HCT116 (cell line): ENCODE measurements at regions of chr5 and their contacts with region 1.

Region 1: DNA sequence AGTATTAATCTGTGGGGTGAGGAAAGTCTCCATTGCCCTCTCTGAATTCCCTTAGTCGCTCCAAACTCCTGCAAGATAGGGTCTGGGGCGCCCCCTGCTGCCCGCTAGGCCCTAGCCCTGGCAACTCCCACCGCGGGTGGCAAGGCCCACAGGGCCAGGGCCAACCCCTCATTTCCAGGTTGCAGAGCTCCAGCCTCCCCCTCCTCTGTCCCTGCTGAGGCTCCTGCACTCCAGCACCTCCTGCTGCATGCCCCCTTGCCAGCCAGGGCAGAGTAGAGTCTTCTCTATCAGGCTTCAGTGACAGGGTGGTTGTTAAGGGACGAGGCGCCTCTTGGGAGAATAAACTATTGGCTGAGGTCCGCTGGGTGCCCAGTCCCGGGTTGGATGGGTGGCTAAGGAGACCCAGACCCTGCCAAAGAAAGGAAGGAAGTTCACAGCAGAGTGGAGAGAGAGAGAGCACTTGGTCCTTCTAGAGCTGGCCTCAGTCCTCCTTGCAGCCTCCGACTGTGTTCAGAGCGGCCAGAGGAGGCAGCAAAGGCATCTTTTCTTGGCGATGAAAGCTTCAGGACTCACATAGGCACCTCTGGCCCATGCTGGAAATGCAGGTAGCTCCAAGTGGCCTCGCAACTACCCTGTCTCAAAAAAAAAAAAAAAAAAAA is 45.6 kb downstream of the SAR1B start:
- DNase-seq: peak; percentile 85
- ATAC-seq: peak; percentile 86
- H3K4me3 ChIP-seq: peak overlapping the region in 1 of 2 experiments; percentile 28; a peak in 2 of 4 replicates
- H3K27ac ChIP-seq: peak overlapping the region; percentile 45
- H3K4me1 ChIP-seq: peaks cover 13 to 27% of the 10 kb centered on the region in 2 experiments
- H3K27me3 ChIP-seq: no peaks in the 10 kb centered on the region
- CTCF ChIP-seq: peak; percentile 86 to 93 (median 90)
- POLR2A ChIP-seq: no peak
- RAD21 ChIP-seq: peak; percentile 95

Region 2: DNA sequence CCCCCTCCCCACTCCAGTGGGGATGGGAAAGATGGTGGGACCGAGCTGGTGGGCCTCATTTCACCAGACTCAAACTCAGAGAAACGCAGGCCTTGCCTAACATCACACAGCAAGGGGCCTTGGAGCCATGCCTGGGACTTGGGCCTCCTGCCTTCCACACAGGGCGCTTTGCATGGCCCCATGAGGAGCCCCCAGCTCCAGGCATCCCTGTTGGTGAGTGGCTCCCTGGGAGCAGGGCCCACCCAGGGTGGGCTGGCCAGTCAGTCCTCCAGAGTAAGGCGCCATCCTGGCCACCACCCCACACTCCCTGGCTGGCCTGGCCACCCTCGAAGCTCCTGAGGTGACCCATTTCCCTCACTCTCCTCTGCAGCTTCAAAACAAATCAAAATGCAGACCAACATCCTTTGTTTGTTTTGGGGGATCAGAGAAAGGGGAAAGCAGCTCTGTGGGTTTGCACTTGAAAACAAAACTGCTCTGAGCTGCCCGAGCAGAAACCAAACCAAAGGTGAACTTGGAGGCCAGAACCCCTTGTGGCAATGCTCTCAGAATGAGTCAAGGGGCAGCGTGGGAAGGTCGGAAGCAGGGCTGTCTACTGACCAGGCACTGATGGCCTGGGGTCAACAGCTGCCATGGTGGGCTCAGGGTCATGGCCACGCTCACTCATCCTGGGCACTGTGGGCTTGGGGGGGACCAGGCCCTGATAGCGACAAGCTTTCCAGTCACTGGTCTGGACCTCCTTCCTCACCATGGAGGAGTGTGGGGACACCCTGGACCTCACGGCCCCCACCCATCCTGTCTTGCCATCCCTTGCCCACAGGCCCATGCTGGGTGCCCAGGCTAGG is 545.2 kb before region 1 on chr5:
- CTCF ChIA-PET with region 1: interaction called, 10 read pairs
- POLR2A ChIA-PET with region 1: no interaction called
- RAD21 ChIA-PET with region 1: no interaction called
- intact Hi-C with region 1: no loop called
- DNase-seq: no peak
- ATAC-seq: no peak
- H3K4me3 ChIP-seq: no peak overlapping the region
- H3K27ac ChIP-seq: no peak overlapping the region
- H3K4me1 ChIP-seq: no peaks in the 10 kb centered on the region
- H3K27me3 ChIP-seq: no peaks in the 10 kb centered on the region
- CTCF ChIP-seq: no peak
- POLR2A ChIP-seq: no peak
- RAD21 ChIP-seq: no peak

Region 3: GRCh38 chr5:134304311-134304710 is 282.7 kb before region 1 on chr5:
- CTCF ChIA-PET with region 1: interaction called, 49 read pairs
- POLR2A ChIA-PET with region 1: no interaction called
- RAD21 ChIA-PET with region 1: interaction called, 3 to 6 read pairs
- intact Hi-C with region 1: loop called (anchors 1 kb)
- DNase-seq: no peak
- ATAC-seq: no peak
- H3K4me3 ChIP-seq: no peak overlapping the region
- H3K27ac ChIP-seq: no peak overlapping the region
- H3K4me1 ChIP-seq: no peaks in the 10 kb centered on the region
- H3K27me3 ChIP-seq: no peaks in the 10 kb centered on the region
- CTCF ChIP-seq: no peak
- POLR2A ChIP-seq: no peak
- RAD21 ChIP-seq: no peak

Region 4: DNA sequence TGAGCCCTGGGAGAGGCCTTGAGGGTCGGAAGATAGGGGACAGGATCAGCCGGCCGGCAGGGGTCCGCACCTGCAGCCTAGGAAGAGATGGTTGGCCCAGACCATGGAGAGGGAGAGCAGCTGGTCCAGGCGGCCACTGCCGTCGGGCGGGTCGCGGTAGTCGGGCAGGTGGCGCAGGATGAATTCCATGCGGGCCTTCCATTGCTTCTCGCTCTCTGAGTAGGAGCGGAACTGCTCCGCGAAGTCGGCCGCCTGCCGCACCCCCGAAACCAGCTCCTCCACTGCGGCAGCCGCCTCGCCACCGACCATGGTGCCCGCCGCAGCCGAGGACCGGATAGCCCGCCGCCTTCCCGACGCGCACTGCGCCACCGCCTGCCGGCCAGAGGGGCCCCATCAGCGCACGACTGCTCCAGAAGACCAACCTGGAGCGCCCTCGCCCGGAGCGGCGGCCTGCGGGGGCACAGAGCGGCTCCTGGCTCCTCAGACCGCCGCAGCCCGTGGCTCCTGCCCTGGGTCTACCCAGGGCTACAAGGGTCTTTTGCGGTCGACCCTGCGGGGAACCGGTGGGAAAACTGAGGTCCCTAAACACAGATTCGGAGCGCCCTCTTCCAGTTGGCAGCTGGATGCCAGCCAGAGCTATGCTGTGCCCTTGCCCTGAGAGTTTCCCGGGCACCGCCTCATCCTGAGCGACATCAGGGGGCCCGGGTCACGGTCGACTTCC is 175.3 kb before region 1 on chr5 and contains the start of gene CDKN2AIPNL:
- CTCF ChIA-PET with region 1: interaction called, 10 read pairs
- POLR2A ChIA-PET with region 1: no interaction called
- RAD21 ChIA-PET with region 1: interaction called in 1 of 2 experiments, 5 read pairs
- intact Hi-C with region 1: no loop called
- DNase-seq: peak; percentile 60
- ATAC-seq: peak; percentile 99
- H3K4me3 ChIP-seq: peak within 1 kb of the TSS; percentile 70 to 98
- H3K27ac ChIP-seq: peak within 1 kb of the TSS; percentile 75
- H3K4me1 ChIP-seq: peaks cover 10 to 30% of the 10 kb centered on the region in 2 experiments
- H3K27me3 ChIP-seq: no peaks in the 10 kb centered on the region
- CTCF ChIP-seq: peak; percentile 67 to 72 (median 69)
- POLR2A ChIP-seq: peak; percentile 49
- RAD21 ChIP-seq: peak; percentile 80
- total RNA-seq, gene CDKN2AIPNL: 63.0 TPM

Region 5: DNA sequence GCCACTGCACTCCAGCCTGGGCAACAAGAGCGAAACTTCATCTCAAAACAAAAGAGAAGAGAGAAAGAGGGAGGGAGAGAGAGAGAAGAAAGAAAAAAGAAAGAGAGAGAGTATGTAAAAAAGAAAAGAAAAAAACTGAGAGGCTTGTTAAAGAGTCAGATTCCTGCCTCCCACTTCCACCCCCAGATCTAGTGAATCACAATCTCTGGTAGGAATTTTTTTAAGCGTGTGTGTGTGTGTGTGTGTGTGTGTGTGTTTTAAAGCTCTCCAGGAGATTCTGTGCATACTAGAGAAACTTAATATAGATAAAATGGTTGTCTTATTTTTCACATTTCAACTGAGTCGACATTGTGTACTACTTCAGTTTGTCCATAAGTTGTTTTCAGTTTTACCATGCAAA is 13.6 kb after region 1 on chr5:
- CTCF ChIA-PET with region 1: interaction called, 22 read pairs
- POLR2A ChIA-PET with region 1: interaction called, 4 read pairs
- RAD21 ChIA-PET with region 1: interaction called in 1 of 2 experiments, 4 read pairs
- intact Hi-C with region 1: no loop called
- DNase-seq: no peak
- ATAC-seq: no peak
- H3K4me3 ChIP-seq: no peak overlapping the region
- H3K27ac ChIP-seq: no peak overlapping the region
- H3K4me1 ChIP-seq: no peaks in the 10 kb centered on the region
- H3K27me3 ChIP-seq: no peaks in the 10 kb centered on the region
- CTCF ChIP-seq: no peak
- POLR2A ChIP-seq: no peak
- RAD21 ChIP-seq: no peak

Region 6: DNA sequence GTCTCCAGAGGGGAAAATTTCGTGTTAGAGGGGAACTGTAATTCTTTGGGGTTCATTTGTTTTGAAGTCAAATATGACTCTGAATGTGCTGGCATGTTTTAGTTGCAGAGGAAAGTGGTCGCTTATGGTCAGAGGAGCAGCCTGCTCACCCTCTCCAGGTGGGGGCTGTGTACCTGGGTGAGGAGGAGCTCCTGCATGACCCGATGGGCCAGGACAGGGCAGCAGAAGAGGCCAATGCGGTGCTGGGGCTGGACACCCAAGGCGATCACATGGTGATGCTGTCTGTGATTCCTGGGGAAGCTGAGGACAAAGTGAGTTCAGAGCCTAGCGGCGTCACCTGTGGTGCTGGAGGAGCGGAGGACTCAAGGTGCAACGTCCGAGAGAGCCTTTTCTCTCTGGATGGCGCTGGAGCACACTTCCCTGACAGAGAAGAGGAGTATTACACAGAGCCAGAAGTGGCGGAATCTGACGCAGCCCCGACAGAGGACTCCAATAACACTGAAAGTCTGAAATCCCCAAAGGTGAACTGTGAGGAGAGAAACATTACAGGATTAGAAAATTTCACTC is 300.7 kb after region 1 on chr5:
- CTCF ChIA-PET with region 1: no interaction called
- POLR2A ChIA-PET with region 1: no interaction called
- RAD21 ChIA-PET with region 1: no interaction called
- intact Hi-C with region 1: no loop called
- DNase-seq: no peak
- ATAC-seq: peak; percentile 25; the same call in 1 of the 2 replicates
- H3K4me3 ChIP-seq: no peak overlapping the region
- H3K27ac ChIP-seq: no peak overlapping the region
- H3K4me1 ChIP-seq: no peaks in the 10 kb centered on the region
- H3K27me3 ChIP-seq: no peaks in the 10 kb centered on the region
- CTCF ChIP-seq: no peak
- POLR2A ChIP-seq: no peak
- RAD21 ChIP-seq: no peak

Region 7: GRCh38 chr5:134904630-134905245 is 317.7 kb after region 1 on chr5 and contains the start of gene PCBD2:
- CTCF ChIA-PET with region 1: interaction called, 16 read pairs
- POLR2A ChIA-PET with region 1: no interaction called
- RAD21 ChIA-PET with region 1: interaction called in 1 of 2 experiments, 3 read pairs
- intact Hi-C with region 1: loop called (anchors 2 kb)
- DNase-seq: peak; percentile 83
- ATAC-seq: peak; percentile 83
- H3K4me3 ChIP-seq: peak within 1 kb of the TSS; percentile 66 to 86
- H3K27ac ChIP-seq: peak within 1 kb of the TSS; percentile 99
- H3K4me1 ChIP-seq: peaks cover 16 to 33% of the 10 kb centered on the region in 2 experiments
- H3K27me3 ChIP-seq: no peaks in the 10 kb centered on the region
- CTCF ChIP-seq: peak in 2 of 3 experiments; percentile 76 to 86; a peak in 4 of 6 replicates
- POLR2A ChIP-seq: peak; percentile 53
- RAD21 ChIP-seq: no peak
- total RNA-seq, gene PCBD2: 10.9 TPM